ENCODE measurements at regions of chr4 and their contacts with region 1.

Region 1: DNA sequence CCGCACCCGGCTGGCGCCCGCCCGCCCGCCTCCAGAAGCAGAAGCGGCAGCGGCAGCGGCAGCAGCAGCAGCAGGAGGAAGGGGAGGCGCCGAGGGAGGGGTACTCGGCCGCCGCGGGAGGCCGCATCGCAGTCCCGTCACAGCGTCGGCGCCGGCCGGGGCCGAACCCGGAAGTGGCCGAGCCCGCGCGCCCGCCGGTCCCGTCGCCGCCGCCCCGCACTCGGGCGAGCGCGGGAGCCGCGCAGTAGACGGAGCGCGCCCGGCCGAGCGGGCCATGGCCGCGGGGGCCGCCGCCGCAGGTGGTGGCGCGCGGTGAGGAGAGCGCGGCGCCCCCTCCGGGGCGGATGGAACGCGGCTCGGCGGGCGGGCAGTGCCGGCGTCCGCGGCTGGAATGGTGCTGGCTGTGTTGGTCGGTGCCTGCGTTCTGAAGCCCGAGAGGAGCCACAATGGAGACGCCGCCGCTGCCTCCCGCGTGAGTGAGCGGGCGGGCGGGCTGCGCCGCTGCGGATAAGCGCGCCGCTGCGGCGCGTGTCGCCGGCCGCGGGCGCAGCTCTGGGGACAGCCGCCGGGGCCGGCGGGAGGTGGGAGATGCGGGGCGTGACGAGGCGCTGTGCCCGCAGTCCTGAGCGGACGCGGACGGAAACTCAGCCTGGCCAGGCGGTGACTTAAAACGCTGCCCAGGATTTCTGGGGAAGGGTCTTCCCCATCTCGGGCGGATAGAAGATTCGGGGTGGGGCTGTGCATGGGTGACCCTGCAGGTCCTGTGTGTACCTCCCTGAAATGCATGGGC is at the start of gene KLHL2:
- DNase-seq: peak; percentile 24 to 89 (median 72)
- H3K4me3 ChIP-seq: peak within 1 kb of the TSS; percentile 59 to 98 (median 88)
- H3K27ac ChIP-seq: peak within 1 kb of the TSS; percentile 70 to 97 (median 92)
- H3K27me3 ChIP-seq: no peaks in the 10 kb centered on the region
- CTCF ChIP-seq: peak in 5 of 56 donors; percentile 6 to 28 (median 10)
- total RNA-seq, gene KLHL2: 46.9 to 127 (median 90.7) TPM

Region 2: GRCh38 chr4:165131247-165131832 is 76.3 kb before region 1 on chr4:
- intact Hi-C with region 1: loop called (anchors 5 kb)
- DNase-seq: peak in 7 of 10 donors; percentile 53 to 82 (median 66)
- H3K4me3 ChIP-seq: peak overlapping the region in 26 of 59 donors; percentile 6 to 41 (median 23)
- H3K27ac ChIP-seq: peak overlapping the region in 14 of 59 donors; percentile 2 to 60 (median 34)
- H3K27me3 ChIP-seq: no peaks in the 10 kb centered on the region
- CTCF ChIP-seq: peak; percentile 78 to 100 (median 94)

Region 3: GRCh38 chr4:165248102-165248501 is 40.5 kb after region 1 on chr4:
- intact Hi-C with region 1: loop called in 1 of 2 experiments (anchors 10 kb)
- DNase-seq: no peak
- H3K4me3 ChIP-seq: no peak overlapping the region
- H3K27ac ChIP-seq: peak overlapping the region in 4 of 59 donors; percentile 1 to 35 (median 18)
- H3K27me3 ChIP-seq: no peaks in the 10 kb centered on the region
- CTCF ChIP-seq: no peak

Region 4: GRCh38 chr4:165384598-165384997 is 177.0 kb after region 1 on chr4:
- intact Hi-C with region 1: loop called in 1 of 2 experiments (anchors 5 kb)
- DNase-seq: no peak
- H3K4me3 ChIP-seq: peak overlapping the region in 1 of 59 donors; percentile 20
- H3K27ac ChIP-seq: peak overlapping the region in 37 of 59 donors; percentile 3 to 94 (median 40)
- H3K27me3 ChIP-seq: no peaks in the 10 kb centered on the region
- CTCF ChIP-seq: no peak

Measured in dorsolateral prefrontal cortex (tissue), 120 donors.